Naive thymus-derived CD4-positive, alpha-beta T cell (primary cell): ENCODE measurements at regions of chr10 and their contacts with region 1.

Region 1: GRCh38 chr10:93482145-93482834 is at the start of gene MYOF:
- DNase-seq: peak in 7 of 9 donors; percentile 45 to 72 (median 64)
- ATAC-seq: peak; percentile 94
- H3K4me3 ChIP-seq: peak within 1 kb of the TSS; percentile 67
- H3K4me3 Mint-ChIP-seq: peak within 1 kb of the TSS; percentile 81 to 95 (median 84)
- H3K27ac ChIP-seq: no peak within 1 kb of the TSS
- H3K27ac Mint-ChIP-seq: peak within 1 kb of the TSS in 3 of 9 donors; percentile 1 to 65 (median 6)
- H3K4me1 ChIP-seq: peaks cover 5 to 6% of the 10 kb centered on the region in 2 donors
- H3K4me1 Mint-ChIP-seq: peaks cover 5 to 19% (median 11%) of the 10 kb centered on the region in 7 donors
- H3K27me3 ChIP-seq: peaks cover 3 to 9% of the 10 kb centered on the region in 2 donors
- H3K27me3 Mint-ChIP-seq: peaks cover 0 to 36% (median 25%) of the 10 kb centered on the region in 5 donors
- total RNA-seq, gene MYOF: 0.57 to 31.2 (median 1.5) TPM

Region 2: GRCh38 chr10:91974960-91975359 is 1507.3 kb before region 1 on chr10:
- CTCF ChIA-PET with region 1: no interaction called
- POLR2A ChIA-PET with region 1: no interaction called
- intact Hi-C with region 1: no loop called
- DNase-seq: no peak
- ATAC-seq: no peak
- H3K4me3 ChIP-seq: no peak overlapping the region
- H3K4me3 Mint-ChIP-seq: no peak overlapping the region
- H3K27ac ChIP-seq: no peak overlapping the region
- H3K27ac Mint-ChIP-seq: no peak overlapping the region
- H3K4me1 ChIP-seq: no peaks in the 10 kb centered on the region
- H3K4me1 Mint-ChIP-seq: peaks cover 0 to 39% (median 2%) of the 10 kb centered on the region in 7 donors
- H3K27me3 ChIP-seq: no peaks in the 10 kb centered on the region
- H3K27me3 Mint-ChIP-seq: no peaks in the 10 kb centered on the region

Region 3: DNA sequence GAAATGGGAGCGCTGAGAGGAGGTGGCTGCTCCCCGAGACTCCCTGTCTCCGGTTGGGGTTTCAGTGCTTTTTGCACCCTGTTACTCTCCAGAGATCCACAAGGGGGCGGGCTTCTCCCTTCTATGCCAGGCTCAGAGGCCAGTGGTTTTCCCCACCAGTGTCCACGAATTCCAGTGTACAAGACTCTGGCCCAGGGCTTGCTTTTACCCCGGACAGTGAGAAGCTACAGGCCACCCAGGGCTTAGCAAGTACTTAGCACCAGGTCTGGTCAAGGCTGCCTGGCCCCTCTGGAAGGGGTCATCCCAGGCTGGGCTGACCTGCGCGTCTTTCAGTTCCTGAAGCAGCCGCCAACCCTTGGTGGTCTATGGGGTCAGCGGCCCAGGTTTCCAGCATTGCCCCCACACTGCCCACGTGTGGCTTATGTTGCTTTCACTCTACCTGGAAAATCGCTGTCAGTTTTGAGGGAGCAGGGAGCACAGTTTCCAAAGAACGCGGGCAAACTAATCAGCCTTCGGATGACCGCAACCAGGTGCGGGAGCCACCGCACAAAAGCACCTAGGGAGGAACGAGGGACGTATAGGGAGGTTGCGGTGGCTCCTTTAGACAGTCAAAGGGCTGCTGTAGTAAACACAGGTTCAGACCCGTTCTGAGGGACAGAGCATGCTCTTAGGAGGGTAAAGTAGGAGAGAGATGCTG is 401.8 kb before region 1 on chr10:
- CTCF ChIA-PET with region 1: no interaction called
- POLR2A ChIA-PET with region 1: no interaction called
- intact Hi-C with region 1: loop called (anchors 1 to 10 kb)
- DNase-seq: peak in 8 of 9 donors; percentile 18 to 57 (median 44)
- ATAC-seq: peak; percentile 81
- H3K4me3 ChIP-seq: no peak overlapping the region
- H3K4me3 Mint-ChIP-seq: peak overlapping the region in 4 of 10 donors; percentile 2 to 70 (median 44)
- H3K27ac ChIP-seq: no peak overlapping the region
- H3K27ac Mint-ChIP-seq: no peak overlapping the region
- H3K4me1 ChIP-seq: no peaks in the 10 kb centered on the region
- H3K4me1 Mint-ChIP-seq: peaks cover 4 to 8% (median 7%) of the 10 kb centered on the region in 7 donors
- H3K27me3 ChIP-seq: no peaks in the 10 kb centered on the region
- H3K27me3 Mint-ChIP-seq: peaks cover 39 to 51% (median 45%) of the 10 kb centered on the region in 5 donors

Region 4: DNA sequence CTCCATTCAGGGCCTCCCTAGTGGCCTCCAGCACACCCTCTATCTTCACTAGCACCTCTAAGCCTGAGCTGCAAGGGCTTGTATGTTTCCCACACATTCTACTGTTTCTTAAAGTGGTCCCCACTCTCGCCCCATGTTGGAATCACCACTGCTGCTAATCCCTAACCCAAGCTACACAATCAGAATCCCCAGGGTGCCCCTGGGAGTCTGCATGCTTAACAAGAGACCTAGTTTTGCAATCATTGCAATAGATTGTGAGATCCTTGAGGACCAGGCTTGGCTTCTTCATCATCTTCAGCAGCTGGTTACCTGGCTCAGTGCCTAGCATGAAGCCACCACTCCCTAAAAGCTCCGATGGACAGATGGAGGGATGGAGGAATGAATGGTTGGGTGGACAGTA is 114.1 kb before region 1 on chr10:
- CTCF ChIA-PET with region 1: interaction called, 309 read pairs
- POLR2A ChIA-PET with region 1: interaction called, 4 read pairs
- intact Hi-C with region 1: no loop called
- DNase-seq: no peak
- ATAC-seq: no peak
- H3K4me3 ChIP-seq: no peak overlapping the region
- H3K4me3 Mint-ChIP-seq: no peak overlapping the region
- H3K27ac ChIP-seq: no peak overlapping the region
- H3K27ac Mint-ChIP-seq: peak overlapping the region in 1 of 9 donors; percentile 53
- H3K4me1 ChIP-seq: no peaks in the 10 kb centered on the region
- H3K4me1 Mint-ChIP-seq: peaks cover 0 to 8% (median 5%) of the 10 kb centered on the region in 7 donors
- H3K27me3 ChIP-seq: no peaks in the 10 kb centered on the region
- H3K27me3 Mint-ChIP-seq: peaks cover 0 to 5% (median 0%) of the 10 kb centered on the region in 5 donors

Region 5: DNA sequence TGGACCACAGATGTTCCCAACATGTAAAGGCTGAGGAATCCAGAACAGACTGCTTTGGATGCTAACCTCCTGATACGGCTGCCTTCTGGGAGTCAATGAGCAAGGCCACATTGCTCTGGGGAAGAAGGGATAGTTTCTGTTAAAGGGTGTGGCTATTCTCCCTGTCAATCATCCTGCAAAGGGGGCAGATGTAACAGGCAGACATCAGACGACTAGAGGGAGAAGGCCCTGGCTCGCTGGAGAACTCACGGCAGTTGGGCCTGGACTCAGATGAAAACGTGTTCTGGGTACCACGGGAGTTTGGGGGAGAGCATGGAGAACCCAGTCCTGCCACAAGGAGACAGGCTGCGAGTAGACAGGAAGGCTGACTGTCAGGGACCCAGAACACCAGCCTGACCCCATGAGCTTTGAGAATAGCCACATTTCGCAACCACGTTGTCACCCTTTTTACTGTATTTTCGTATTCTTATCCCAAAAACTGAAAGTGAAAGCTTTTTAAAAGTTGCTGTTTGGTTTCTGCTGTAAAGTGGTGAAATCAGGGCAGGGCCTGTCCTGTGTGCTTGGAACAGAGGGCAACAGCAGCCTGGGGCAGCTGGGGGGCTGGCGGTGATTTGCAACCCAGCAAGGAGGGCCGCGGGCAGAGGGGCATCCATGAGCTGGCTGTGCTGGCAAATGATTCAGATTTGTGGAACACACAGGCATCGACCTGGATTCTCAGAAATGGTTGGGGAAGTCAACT is 95.5 kb before region 1 on chr10:
- CTCF ChIA-PET with region 1: interaction called, 18 read pairs
- POLR2A ChIA-PET with region 1: no interaction called
- intact Hi-C with region 1: no loop called
- DNase-seq: no peak
- ATAC-seq: peak; percentile 77
- H3K4me3 ChIP-seq: no peak overlapping the region
- H3K4me3 Mint-ChIP-seq: peak overlapping the region; percentile 26 to 77 (median 40)
- H3K27ac ChIP-seq: no peak overlapping the region
- H3K27ac Mint-ChIP-seq: peak overlapping the region in 8 of 9 donors; percentile 1 to 94 (median 67)
- H3K4me1 ChIP-seq: peaks cover 0 to 14% of the 10 kb centered on the region in 2 donors
- H3K4me1 Mint-ChIP-seq: peaks cover 26 to 42% (median 35%) of the 10 kb centered on the region in 7 donors
- H3K27me3 ChIP-seq: no peaks in the 10 kb centered on the region
- H3K27me3 Mint-ChIP-seq: peaks cover 0 to 10% (median 3%) of the 10 kb centered on the region in 5 donors

Region 6: DNA sequence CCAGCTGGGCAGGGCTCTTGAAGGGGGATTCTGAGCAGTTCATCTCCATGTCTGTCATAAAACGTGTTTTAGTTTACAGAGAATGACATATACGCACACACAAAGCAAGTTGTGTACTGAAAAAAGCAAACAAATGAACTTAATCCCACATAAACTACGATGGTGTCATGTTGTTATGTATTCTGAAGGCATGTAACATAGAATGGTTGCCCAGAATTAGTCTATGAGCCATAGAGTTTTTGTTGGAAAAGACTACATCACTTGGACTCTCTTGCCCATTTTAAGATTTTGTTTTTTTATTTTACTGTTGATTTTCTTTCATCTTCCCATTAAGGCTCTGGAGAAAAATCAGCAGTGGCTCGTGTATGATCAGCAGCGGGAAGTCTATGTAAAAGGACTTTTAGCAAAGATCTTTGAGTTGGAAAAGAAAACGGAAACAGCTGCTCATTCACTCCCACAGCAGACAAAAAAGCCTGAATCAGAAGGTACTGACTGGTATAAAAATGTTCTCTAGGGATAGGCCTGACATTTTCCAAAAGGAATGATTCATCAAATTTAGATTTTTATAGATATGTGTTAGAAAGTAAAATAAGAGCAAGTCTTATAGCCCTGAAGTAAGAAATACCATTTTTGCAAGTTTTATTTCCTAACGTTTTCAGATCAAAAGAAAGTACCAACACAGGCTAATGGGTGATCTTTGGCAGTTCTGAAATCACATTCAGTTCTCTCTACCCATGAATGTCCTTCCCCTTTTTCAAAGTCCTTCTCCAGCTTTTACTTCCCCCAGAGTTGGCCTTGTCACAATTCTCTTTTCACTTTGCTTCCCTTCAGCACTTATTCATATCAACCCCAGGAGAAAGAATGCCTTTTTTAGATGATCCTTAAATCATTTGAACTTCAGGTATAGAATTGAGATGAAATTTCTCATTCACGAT is 33.0 kb after region 1 on chr10:
- CTCF ChIA-PET with region 1: interaction called, 6 read pairs
- POLR2A ChIA-PET with region 1: no interaction called
- intact Hi-C with region 1: loop called (anchors 1 kb)
- DNase-seq: no peak
- ATAC-seq: peak; percentile 67
- H3K4me3 ChIP-seq: no peak overlapping the region
- H3K4me3 Mint-ChIP-seq: no peak overlapping the region
- H3K27ac ChIP-seq: no peak overlapping the region
- H3K27ac Mint-ChIP-seq: no peak overlapping the region
- H3K4me1 ChIP-seq: no peaks in the 10 kb centered on the region
- H3K4me1 Mint-ChIP-seq: peaks cover 0 to 5% (median 0%) of the 10 kb centered on the region in 7 donors
- H3K27me3 ChIP-seq: no peaks in the 10 kb centered on the region
- H3K27me3 Mint-ChIP-seq: no peaks in the 10 kb centered on the region